Heart right ventricle (tissue), 16 donors: ENCODE measurements at regions of chr18 and their contacts with region 1.

Region 1: DNA sequence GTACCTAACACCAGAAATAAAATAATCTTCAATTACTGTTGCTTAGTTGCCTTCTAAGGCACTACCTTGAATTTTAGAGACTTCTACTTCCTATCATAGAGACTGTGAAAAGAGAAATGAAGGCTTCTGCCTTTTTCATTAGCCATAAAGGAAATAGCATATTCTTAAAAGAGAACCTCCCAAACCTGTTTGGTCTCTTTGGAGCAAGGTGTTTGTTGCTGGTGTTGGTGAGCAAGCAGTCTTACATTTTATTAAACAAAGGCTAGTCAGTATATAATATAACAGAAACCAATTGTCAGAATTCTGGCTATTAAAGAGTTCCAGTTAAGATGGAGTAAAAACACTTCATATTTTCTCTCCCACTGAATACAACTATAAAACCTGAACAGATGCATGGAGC is 116.4 kb downstream of the TAF4B start:
- DNase-seq: no peak
- ATAC-seq: no peak
- H3K4me3 ChIP-seq: no peak overlapping the region
- H3K27ac ChIP-seq: no peak overlapping the region
- H3K4me1 ChIP-seq: no peaks in the 10 kb centered on the region
- H3K27me3 ChIP-seq: no peaks in the 10 kb centered on the region
- CTCF ChIP-seq: no peak

Region 2: DNA sequence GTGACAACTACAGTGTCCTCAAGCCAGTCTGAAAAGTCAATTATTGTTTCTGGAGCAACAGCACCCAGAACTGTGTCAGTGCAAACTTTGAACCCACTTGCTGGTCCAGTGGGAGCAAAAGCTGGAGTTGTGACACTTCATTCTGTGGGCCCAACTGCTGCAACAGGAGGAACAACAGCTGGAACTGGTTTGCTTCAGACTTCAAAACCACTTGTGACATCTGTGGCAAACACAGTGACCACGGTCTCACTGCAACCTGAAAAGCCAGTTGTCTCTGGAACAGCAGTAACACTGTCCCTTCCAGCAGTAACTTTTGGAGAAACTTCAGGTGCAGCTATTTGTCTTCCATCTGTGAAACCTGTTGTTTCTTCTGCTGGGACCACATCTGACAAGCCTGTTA is 56.6 kb before region 1 on chr18:
- intact Hi-C with region 1: loop called in 1 of 10 experiments (anchors 10 kb)
- DNase-seq: no peak
- ATAC-seq: no peak
- H3K4me3 ChIP-seq: no peak overlapping the region
- H3K27ac ChIP-seq: no peak overlapping the region
- H3K4me1 ChIP-seq: no peaks in the 10 kb centered on the region
- H3K27me3 ChIP-seq: no peaks in the 10 kb centered on the region
- CTCF ChIP-seq: no peak

Region 3: DNA sequence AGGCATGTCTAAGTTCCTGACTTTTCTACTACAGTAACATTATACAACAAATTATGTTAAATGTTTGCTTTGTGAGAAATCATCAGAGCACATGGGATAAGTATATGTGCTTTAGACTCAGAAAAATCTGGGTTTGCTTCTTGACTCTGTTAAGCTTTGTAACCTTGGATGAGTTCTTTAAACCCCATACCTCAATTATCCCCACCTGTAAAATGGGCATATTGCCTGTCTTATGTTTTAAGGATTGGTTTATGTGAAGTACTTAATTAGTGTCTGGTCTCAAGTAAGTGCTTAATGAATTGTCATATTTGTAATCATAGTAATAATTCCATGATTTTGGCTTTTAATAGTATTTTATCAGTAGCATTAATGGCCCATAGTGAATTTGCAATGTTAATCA is 19.4 kb after region 1 on chr18:
- intact Hi-C with region 1: no loop called
- DNase-seq: no peak
- ATAC-seq: no peak
- H3K4me3 ChIP-seq: no peak overlapping the region
- H3K27ac ChIP-seq: no peak overlapping the region
- H3K4me1 ChIP-seq: no peaks in the 10 kb centered on the region
- H3K27me3 ChIP-seq: no peaks in the 10 kb centered on the region
- CTCF ChIP-seq: no peak